Activated naive CD4-positive, alpha-beta T cell treated with anti-CD3 and anti-CD28 coated beads for 36 hours (primary cell): ENCODE measurements at regions of chr15 and their contacts with region 1.

Region 1: GRCh38 chr15:55407949-55408791 is at the starts of genes CCPG1 and PIERCE2:
- DNase-seq: peak; percentile 90
- H3K4me3 Mint-ChIP-seq: peak within 1 kb of the TSS; percentile 82
- H3K27ac Mint-ChIP-seq: peak within 1 kb of the TSS; percentile 68
- H3K4me1 Mint-ChIP-seq: peaks cover 24% of the 10 kb centered on the region
- H3K27me3 Mint-ChIP-seq: no peaks in the 10 kb centered on the region
- total RNA-seq, gene CCPG1: 9.8 to 11.6 TPM
- total RNA-seq, gene PIERCE2: 0.38 to 0.44 TPM

Region 2: GRCh38 chr15:55221090-55222011 is 186.8 kb before region 1 on chr15:
- CTCF ChIA-PET with region 1: no interaction called
- intact Hi-C with region 1: loop called (anchors 1 kb)
- DNase-seq: peak; percentile 49
- H3K4me3 Mint-ChIP-seq: peak overlapping the region; percentile 10
- H3K27ac Mint-ChIP-seq: peak overlapping the region; percentile 87
- H3K4me1 Mint-ChIP-seq: peaks cover 67% of the 10 kb centered on the region
- H3K27me3 Mint-ChIP-seq: no peaks in the 10 kb centered on the region

Region 3: GRCh38 chr15:55318588-55319494 is 89.3 kb before region 1 on chr15 and contains the starts of genes PIGB and PIGBOS1:
- CTCF ChIA-PET with region 1: interaction called, 9 read pairs
- intact Hi-C with region 1: loop called (anchors 1 kb)
- DNase-seq: peak; percentile 86
- H3K4me3 Mint-ChIP-seq: peak within 1 kb of the TSS; percentile 98
- H3K27ac Mint-ChIP-seq: peak within 1 kb of the TSS; percentile 93
- H3K4me1 Mint-ChIP-seq: peaks cover 51% of the 10 kb centered on the region
- H3K27me3 Mint-ChIP-seq: no peaks in the 10 kb centered on the region
- total RNA-seq, gene PIGB: 13.3 to 13.8 TPM
- total RNA-seq, gene PIGBOS1: 7.3 to 9.2 TPM

Region 4: GRCh38 chr15:55494931-55495330 is 86.8 kb after region 1 on chr15:
- CTCF ChIA-PET with region 1: no interaction called
- intact Hi-C with region 1: loop called (anchors 1 kb)
- DNase-seq: no peak
- H3K4me3 Mint-ChIP-seq: no peak overlapping the region
- H3K27ac Mint-ChIP-seq: no peak overlapping the region
- H3K4me1 Mint-ChIP-seq: peaks cover 8% of the 10 kb centered on the region
- H3K27me3 Mint-ChIP-seq: no peaks in the 10 kb centered on the region